ENCODE measurements at regions of chr1 and their contacts with region 1.

Region 1: GRCh38 chr1:213982672-213983492 is 4.9 kb upstream of the PROX1 start:
- DNase-seq: no peak

Region 2: GRCh38 chr1:213564215-213564659 is 418.6 kb before region 1 on chr1:
- intact Hi-C with region 1: loop called (anchors 5 kb)
- DNase-seq: no peak

Region 3: DNA sequence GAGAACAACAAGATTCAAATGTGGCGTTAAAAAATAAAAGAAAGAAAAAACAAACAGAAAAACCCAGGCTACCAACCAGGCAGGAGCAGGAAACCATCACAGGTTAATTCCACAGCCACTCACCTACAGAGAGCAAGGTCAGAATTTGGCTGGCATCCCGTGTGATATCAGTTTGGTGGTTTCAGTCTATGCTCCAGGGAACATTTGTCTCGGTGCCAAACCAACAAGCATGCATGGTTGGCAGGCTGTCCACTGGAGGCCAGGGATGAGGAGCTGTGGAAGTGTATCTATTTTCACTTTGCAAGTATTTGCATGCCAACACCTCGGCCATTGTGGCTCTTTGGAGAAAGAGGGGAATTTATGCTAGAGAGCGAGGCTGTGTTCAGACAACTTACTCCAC is 48.2 kb before region 1 on chr1:
- intact Hi-C with region 1: loop called (anchors 5 kb)
- DNase-seq: peak; percentile 82

Region 4: DNA sequence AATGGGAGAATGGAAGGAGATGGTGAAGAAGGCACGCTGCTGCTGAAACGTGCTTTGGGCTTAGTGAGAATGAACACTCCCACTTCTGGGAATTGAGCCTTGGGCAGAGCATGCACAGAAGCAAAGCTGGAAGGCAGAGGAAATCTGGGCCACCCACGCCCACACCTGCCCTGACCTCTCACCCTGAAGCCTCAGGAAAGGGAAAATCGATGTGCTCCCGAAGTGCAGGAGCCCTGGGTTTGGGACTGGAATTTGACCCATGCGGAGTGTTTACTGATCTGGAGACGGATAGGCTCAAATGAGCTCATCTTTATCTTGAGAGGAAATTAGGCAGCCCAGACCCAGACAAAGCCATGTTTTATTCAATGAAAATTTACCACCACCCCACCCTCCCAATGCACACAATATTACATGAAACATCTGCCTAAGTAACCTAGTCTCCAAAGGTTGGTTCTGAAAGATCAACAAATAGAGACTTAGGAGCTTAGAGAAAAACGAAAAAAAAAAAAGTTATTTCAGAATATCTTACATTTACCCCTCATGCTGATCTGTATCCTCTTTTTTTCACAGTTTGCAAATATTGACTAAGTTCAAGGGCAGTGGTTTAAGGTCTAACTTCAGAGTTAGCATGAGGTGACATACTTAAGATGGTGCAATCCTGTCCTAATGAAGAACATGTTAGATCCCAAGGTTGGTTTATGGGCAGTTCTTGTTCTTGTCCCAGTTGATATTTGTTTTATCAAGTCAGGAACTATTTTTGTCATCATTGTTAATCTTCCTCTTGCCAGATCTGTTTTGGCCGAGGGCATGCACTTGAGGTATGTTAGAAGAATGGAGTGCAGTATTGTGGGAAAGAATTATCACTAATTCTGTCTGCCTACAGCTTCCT is 67.9 kb after region 1 on chr1:
- intact Hi-C with region 1: no loop called
- DNase-seq: no peak

Region 5: DNA sequence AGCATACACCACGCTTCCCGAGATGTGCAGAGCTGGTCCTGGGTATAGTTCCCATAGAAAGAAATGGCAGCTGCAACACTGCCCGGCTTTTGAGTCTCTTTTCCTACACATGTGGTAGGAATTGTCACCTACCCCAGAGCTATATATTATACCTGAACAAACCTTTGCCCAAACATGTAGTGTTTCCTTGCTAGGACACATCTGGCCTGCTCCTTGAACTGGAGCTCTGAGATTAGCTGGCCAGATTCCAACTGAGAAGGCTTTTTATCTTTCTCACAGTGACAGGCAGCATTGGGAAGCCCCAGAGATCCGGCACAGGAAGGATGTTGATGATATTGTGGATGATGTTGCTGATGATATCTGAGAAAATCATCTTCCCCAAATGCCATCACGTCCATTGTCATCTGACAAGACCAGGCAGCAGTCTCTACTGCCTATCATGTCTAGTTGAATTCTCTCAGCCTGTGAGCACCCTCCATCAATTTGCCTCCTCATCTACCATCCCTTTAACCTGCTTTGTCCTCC is 183.0 kb after region 1 on chr1:
- intact Hi-C with region 1: no loop called
- DNase-seq: no peak

Measured in cardiac septum (tissue), 1 donor.